Naive thymus-derived CD8-positive, alpha-beta T cell (primary cell): ENCODE measurements at regions of chr11 and their contacts with region 1.

Region 1: DNA sequence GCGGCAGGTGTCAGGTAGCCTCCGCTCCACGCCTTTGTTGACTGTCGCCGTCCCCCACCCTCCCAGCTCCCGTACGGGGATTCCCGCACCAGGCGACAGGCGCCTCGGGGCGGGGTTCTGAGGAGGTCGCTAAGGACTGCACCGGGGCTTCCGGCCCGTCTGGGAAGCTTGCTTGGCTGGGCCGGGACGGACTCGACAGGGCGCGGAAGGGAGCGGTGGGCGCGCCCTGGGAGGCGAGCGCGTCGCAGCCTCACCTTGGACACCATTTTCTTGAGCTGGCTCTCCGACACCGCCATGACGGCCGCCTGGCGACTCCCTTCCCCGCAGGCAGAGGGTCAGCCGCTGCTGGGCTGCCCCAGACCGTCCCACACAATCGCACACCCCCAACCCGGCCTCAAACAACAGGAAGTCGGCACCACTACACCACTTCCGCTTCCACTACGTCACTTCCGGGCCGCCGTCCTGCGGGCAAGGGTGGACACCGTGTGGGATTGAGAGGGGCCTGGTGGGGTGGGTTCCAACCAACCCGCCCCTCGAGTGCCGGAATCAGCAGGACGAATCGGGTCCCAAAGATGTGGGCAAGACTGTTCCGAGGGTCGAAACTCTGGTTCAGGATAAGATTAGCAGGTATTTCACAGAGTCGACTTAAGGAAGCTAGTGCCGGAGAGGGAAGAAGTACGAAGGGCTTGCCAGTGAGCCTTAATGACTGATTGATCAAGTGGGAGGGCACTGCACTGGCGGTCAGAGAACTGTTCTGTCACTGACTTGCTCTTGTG is at the start of gene TSG101:
- DNase-seq: peak; percentile 83 to 99 (median 90)
- ATAC-seq: peak; percentile 85 to 86
- H3K4me3 Mint-ChIP-seq: peak within 1 kb of the TSS; percentile 98 to 100 (median 99)
- H3K27ac Mint-ChIP-seq: peak within 1 kb of the TSS; percentile 100
- H3K4me1 Mint-ChIP-seq: peaks cover 27 to 62% (median 54%) of the 10 kb centered on the region in 4 donors
- H3K27me3 Mint-ChIP-seq: peaks cover 0 to 3% (median 0%) of the 10 kb centered on the region in 5 donors
- polyA plus RNA-seq, gene TSG101: 31.8 to 58.7 (median 35.8) TPM

Region 2: GRCh38 chr11:18012863-18013781 is 513.6 kb before region 1 on chr11 and contains the start of gene SERGEF:
- POLR2A ChIA-PET with region 1: interaction called, 13 read pairs
- DNase-seq: peak; percentile 82 to 95 (median 88)
- ATAC-seq: peak; percentile 81 to 87
- H3K4me3 Mint-ChIP-seq: peak within 1 kb of the TSS; percentile 89 to 99 (median 99)
- H3K27ac Mint-ChIP-seq: peak within 1 kb of the TSS; percentile 94 to 100 (median 98)
- H3K4me1 Mint-ChIP-seq: peaks cover 25 to 45% (median 34%) of the 10 kb centered on the region in 4 donors
- H3K27me3 Mint-ChIP-seq: no peaks in the 10 kb centered on the region
- polyA plus RNA-seq, gene SERGEF: 61.8 to 70.3 (median 69.3) TPM

Region 3: GRCh38 chr11:18321980-18322711 is 204.6 kb before region 1 on chr11 and contains the starts of genes GTF2H1 and HPS5:
- POLR2A ChIA-PET with region 1: interaction called, 20 read pairs
- DNase-seq: peak; percentile 84 to 100 (median 97)
- ATAC-seq: peak; percentile 87 to 90
- H3K4me3 Mint-ChIP-seq: peak within 1 kb of the TSS; percentile 93 to 100 (median 99)
- H3K27ac Mint-ChIP-seq: peak within 1 kb of the TSS; percentile 98 to 100 (median 100)
- H3K4me1 Mint-ChIP-seq: peaks cover 37 to 85% (median 79%) of the 10 kb centered on the region in 4 donors
- H3K27me3 Mint-ChIP-seq: no peaks in the 10 kb centered on the region
- polyA plus RNA-seq, gene GTF2H1: 29.0 to 34.3 (median 29.0) TPM
- polyA plus RNA-seq, gene HPS5: 11.6 to 12.2 (median 11.7) TPM

Region 4: GRCh38 chr11:18383388-18384156 is 143.1 kb before region 1 on chr11:
- POLR2A ChIA-PET with region 1: interaction called, 10 read pairs
- DNase-seq: peak in 9 of 10 donors; percentile 40 to 79 (median 63)
- ATAC-seq: peak; percentile 79 to 81
- H3K4me3 Mint-ChIP-seq: peak overlapping the region; percentile 47 to 90 (median 76)
- H3K27ac Mint-ChIP-seq: peak overlapping the region; percentile 92 to 100 (median 98)
- H3K4me1 Mint-ChIP-seq: peaks cover 24 to 38% (median 34%) of the 10 kb centered on the region in 4 donors
- H3K27me3 Mint-ChIP-seq: no peaks in the 10 kb centered on the region

Region 5: DNA sequence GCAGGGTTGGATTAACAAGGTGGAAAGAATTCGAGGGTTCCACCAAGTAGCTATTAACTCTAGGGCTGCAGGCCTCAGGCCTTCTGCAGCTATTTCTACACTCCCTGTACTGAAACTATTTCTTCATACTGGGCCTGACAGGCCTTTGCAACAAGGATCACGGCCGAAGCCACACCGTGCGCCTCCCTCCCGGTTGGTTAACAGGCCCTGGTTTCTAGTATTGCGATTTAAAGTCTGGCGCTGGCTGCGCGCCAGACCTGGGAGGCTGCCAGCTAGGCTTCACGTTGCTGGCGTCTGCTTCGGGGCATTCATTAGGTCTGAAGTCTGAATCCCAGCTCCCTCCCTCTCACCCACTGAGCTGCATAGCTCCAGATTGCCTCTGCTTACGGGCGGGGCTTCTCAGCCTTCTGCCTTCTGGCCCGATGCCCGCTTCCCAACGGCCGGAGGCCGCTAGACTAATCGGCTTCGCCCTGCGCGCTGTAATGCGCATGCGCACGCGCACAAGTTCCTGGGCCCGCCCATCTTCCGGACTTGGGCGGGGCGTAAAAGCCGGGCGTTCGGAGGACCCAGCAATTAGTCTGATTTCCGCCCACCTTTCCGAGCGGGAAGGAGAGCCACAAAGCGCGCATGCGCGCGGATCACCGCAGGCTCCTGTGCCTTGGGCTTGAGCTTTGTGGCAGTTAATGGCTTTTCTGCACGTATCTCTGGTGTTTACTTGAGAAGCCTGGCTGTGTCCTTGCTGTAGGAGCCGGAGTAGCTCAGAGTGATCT is 130.8 kb before region 1 on chr11:
- POLR2A ChIA-PET with region 1: interaction called, 22 read pairs
- DNase-seq: peak; percentile 84 to 98 (median 94)
- ATAC-seq: peak; percentile 53 to 56
- H3K4me3 Mint-ChIP-seq: peak overlapping the region; percentile 94 to 99 (median 98)
- H3K27ac Mint-ChIP-seq: peak overlapping the region; percentile 88 to 99 (median 98)
- H3K4me1 Mint-ChIP-seq: peaks cover 9 to 45% (median 35%) of the 10 kb centered on the region in 4 donors
- H3K27me3 Mint-ChIP-seq: no peaks in the 10 kb centered on the region

Region 6: DNA sequence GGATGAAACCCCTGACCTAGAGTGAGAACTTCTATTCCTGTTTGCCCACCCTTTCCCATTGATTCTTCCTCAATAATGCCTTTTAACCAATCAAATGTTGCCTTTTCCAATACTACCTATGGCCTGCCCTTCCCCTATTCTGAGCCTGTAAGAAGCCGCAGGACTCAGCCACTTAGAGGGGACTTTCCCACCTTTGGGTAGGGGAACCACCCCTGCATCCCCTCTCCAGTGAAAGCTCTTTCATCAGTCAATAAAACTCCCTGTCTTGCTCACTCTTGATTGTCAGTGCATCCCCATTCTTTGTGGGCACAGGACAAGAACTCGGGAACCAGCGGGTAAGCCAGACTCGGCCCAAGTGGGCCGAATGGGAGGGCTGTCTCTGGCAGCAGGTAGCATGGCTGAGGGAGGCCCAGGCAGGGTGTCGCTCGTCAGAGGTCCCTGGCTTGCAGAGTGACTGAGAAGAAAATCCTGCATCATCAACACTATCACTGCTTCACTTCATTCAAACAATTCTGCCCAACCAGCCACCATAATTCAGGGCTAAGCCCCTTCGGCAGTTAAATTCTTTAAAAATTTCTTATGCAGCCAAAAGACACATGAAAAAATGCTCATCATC is 40.7 kb before region 1 on chr11:
- POLR2A ChIA-PET with region 1: no interaction called
- DNase-seq: no peak
- ATAC-seq: no peak
- H3K4me3 Mint-ChIP-seq: no peak overlapping the region
- H3K27ac Mint-ChIP-seq: peak overlapping the region in 4 of 10 donors; percentile 16 to 32 (median 30)
- H3K4me1 Mint-ChIP-seq: peaks cover 2 to 11% (median 2%) of the 10 kb centered on the region in 4 donors
- H3K27me3 Mint-ChIP-seq: no peaks in the 10 kb centered on the region

Region 7: GRCh38 chr11:18567081-18567480 is 40.4 kb after region 1 on chr11:
- POLR2A ChIA-PET with region 1: no interaction called
- DNase-seq: no peak
- ATAC-seq: no peak
- H3K4me3 Mint-ChIP-seq: no peak overlapping the region
- H3K27ac Mint-ChIP-seq: peak overlapping the region in 1 of 10 donors; percentile 56
- H3K4me1 Mint-ChIP-seq: peaks cover 0 to 1% (median 0%) of the 10 kb centered on the region in 4 donors
- H3K27me3 Mint-ChIP-seq: no peaks in the 10 kb centered on the region

Region 8: GRCh38 chr11:18706330-18707243 is 179.9 kb after region 1 on chr11:
- POLR2A ChIA-PET with region 1: interaction called, 16 read pairs
- DNase-seq: peak in 9 of 10 donors; percentile 23 to 82 (median 60)
- ATAC-seq: peak; percentile 83 to 91
- H3K4me3 Mint-ChIP-seq: peak overlapping the region; percentile 86 to 100 (median 94)
- H3K27ac Mint-ChIP-seq: peak overlapping the region; percentile 82 to 98 (median 96)
- H3K4me1 Mint-ChIP-seq: peaks cover 16 to 27% (median 24%) of the 10 kb centered on the region in 4 donors
- H3K27me3 Mint-ChIP-seq: peaks cover 0 to 1% (median 0%) of the 10 kb centered on the region in 5 donors